Posterior cingulate gyrus (tissue), 11 donors: ENCODE measurements at regions of chr5 and their contacts with region 1.

Region 1: DNA sequence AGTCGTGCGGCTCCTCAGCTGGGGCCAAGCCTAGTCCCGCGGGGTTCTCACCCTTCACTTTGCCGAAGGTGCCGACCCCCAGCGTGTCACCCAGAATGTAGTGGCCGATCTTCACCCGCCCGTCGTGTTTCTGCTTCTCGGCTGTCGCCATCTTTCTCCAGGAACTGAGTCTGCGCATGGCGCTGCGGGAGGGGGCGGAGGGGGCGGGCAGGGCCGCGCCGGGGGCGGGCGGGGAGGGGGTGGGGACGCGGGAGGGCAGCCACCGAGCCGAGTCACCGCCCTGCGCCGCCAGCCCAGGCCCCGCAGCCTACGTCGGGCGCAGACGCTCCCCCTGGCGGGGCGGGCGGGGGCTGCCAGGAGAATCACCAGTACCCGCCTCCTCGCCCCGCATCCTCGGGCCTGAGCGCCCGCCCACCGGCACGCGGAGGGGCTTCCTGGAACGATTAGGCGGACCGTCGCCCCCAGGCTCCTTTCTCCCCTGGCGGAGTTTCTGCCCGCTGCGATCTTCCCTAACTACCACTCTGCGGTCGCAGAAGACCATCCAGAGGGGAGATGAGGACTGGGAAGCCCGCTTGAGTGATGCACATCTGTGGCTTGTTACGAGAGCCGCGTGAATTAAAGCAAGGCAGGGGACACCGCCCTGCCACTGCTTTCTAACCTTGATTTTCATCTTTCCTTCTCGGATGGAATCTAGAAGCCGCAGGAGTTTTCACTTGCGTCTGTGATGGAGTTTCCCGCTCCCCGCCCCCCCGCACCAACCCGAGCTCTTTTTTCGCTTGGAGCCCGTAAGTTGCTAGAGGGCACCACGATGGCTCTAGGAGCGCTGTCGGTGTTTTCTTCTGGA is at the start of gene PRKAA1:
- DNase-seq: peak; percentile 75 to 98 (median 86)

Region 2: GRCh38 chr5:40834849-40835787 is 36.9 kb after region 1 on chr5 and contains the start of gene RPL37:
- intact Hi-C with region 1: loop called (anchors 1 kb)
- DNase-seq: peak; percentile 94 to 99 (median 96)

Region 3: GRCh38 chr5:41048986-41049385 is 250.8 kb after region 1 on chr5:
- intact Hi-C with region 1: no loop called
- DNase-seq: no peak

Region 4: GRCh38 chr5:41109186-41109585 is 311.0 kb after region 1 on chr5:
- intact Hi-C with region 1: no loop called
- DNase-seq: no peak